Ovary (tissue), 10 donors: ENCODE measurements at regions of chr1 and their contacts with region 1.

Region 1: GRCh38 chr1:183363972-183364371 is 54.2 kb downstream of the NMNAT2 start:
- DNase-seq: no peak
- H3K4me3 ChIP-seq: no peak overlapping the region
- H3K27ac ChIP-seq: no peak overlapping the region
- H3K4me1 ChIP-seq: no peaks in the 10 kb centered on the region
- H3K27me3 ChIP-seq: no peaks in the 10 kb centered on the region
- CTCF ChIP-seq: no peak
- EP300 ChIP-seq: no peak
- POLR2A ChIP-seq: no peak

Region 2: GRCh38 chr1:183058851-183059502 is 305.0 kb before region 1 on chr1:
- intact Hi-C with region 1: no loop called
- DNase-seq: no peak
- H3K4me3 ChIP-seq: no peak overlapping the region
- H3K27ac ChIP-seq: no peak overlapping the region
- H3K4me1 ChIP-seq: peaks cover 8% of the 10 kb centered on the region
- H3K27me3 ChIP-seq: no peaks in the 10 kb centered on the region
- CTCF ChIP-seq: no peak
- EP300 ChIP-seq: no peak
- POLR2A ChIP-seq: no peak

Region 3: DNA sequence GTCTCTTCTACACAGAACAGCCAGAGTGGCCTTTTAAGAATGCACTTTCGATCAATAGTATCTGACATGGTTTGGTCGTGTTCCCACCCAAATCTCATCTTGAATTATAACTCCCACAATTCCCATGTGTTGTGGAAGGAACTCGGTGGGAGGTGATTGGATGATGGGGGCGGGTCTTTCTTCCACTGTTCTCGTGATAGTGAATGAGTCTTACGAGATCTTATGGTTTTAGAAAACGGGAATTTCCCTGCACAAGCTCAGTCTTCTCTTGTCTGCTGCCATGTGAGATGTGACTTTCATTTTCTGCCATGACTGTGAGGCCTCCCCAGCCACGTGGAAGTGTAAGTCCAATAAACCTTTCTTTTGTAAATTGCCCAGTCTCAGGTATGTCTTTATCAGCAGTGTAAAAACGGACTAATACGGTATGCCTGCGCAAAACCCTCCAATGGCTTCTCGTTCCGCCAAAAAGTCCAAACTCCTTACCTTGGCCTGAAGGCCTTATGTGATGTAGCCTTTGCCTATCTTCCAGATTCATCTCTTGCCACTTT is 85.3 kb after region 1 on chr1:
- intact Hi-C with region 1: loop called in 1 of 4 experiments (anchors 5 kb)
- DNase-seq: no peak
- H3K4me3 ChIP-seq: no peak overlapping the region
- H3K27ac ChIP-seq: no peak overlapping the region
- H3K4me1 ChIP-seq: no peaks in the 10 kb centered on the region
- H3K27me3 ChIP-seq: no peaks in the 10 kb centered on the region
- CTCF ChIP-seq: no peak
- EP300 ChIP-seq: no peak
- POLR2A ChIP-seq: no peak

Region 4: DNA sequence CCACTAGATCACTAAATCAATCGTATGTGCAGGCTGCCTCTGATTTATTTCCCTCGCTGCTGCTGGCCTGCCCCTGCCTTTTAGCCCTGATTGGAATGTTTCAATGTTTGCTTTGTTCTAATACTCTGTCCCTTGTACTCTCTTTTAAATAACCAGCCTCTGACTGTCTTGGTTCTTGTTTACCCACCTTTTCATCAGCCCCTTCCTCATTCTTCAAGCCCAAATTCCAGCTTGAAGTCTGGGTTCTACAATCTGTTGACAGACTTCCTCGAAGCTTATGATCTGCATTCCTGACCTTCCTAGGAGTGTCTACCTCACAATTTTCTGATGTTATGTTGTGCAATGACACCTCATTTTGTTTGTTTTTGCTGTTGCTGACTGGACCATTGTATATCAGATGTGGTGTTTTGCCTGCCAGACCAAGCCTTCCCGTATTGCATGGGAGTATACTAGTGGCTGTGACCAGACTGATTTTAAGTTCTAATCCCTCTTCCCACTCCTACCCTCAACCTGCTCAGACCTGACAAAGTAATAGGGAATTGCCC is 335.7 kb after region 1 on chr1:
- intact Hi-C with region 1: no loop called
- DNase-seq: no peak
- H3K4me3 ChIP-seq: no peak overlapping the region
- H3K27ac ChIP-seq: no peak overlapping the region
- H3K4me1 ChIP-seq: peaks cover 3% of the 10 kb centered on the region
- H3K27me3 ChIP-seq: no peaks in the 10 kb centered on the region
- CTCF ChIP-seq: no peak
- EP300 ChIP-seq: no peak
- POLR2A ChIP-seq: no peak